Activated CD4-positive, alpha-beta T cell treated with anti-CD3 and anti-CD28 coated beads for 36 hours (primary cell): ENCODE measurements at regions of chr3 and their contacts with region 1.

Region 1: GRCh38 chr3:88979760-88980159 is 127.7 kb upstream of the EPHA3 start:
- DNase-seq: no peak
- ATAC-seq: no peak
- H3K4me3 Mint-ChIP-seq: no peak overlapping the region
- H3K27ac Mint-ChIP-seq: no peak overlapping the region
- H3K4me1 Mint-ChIP-seq: no peaks in the 10 kb centered on the region
- H3K27me3 Mint-ChIP-seq: no peaks in the 10 kb centered on the region

Region 2: DNA sequence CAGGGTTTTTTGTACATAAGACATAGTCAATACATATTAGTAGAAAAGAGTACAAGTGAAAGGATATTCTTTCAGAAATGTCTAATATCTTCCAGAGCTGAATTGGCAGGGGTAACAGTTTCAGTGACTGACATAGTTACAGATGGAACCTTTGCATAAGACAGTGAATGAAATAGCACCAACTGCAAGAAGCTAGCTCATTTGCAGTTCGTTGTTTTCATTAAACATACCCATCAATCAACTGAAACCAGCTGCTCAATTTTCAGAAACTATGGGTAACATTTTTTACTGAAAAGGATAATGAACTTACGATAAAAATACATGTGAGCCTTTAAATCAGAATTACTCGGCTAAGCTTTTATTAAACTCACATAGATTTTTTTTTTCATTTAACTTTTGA is 33.8 kb after region 1 on chr3:
- CTCF ChIA-PET with region 1: no interaction called
- POLR2A ChIA-PET with region 1: no interaction called
- intact Hi-C with region 1: loop called in 1 of 2 experiments (anchors 1 kb)
- DNase-seq: no peak
- ATAC-seq: no peak
- H3K4me3 Mint-ChIP-seq: no peak overlapping the region
- H3K27ac Mint-ChIP-seq: no peak overlapping the region
- H3K4me1 Mint-ChIP-seq: no peaks in the 10 kb centered on the region
- H3K27me3 Mint-ChIP-seq: no peaks in the 10 kb centered on the region

Region 3: DNA sequence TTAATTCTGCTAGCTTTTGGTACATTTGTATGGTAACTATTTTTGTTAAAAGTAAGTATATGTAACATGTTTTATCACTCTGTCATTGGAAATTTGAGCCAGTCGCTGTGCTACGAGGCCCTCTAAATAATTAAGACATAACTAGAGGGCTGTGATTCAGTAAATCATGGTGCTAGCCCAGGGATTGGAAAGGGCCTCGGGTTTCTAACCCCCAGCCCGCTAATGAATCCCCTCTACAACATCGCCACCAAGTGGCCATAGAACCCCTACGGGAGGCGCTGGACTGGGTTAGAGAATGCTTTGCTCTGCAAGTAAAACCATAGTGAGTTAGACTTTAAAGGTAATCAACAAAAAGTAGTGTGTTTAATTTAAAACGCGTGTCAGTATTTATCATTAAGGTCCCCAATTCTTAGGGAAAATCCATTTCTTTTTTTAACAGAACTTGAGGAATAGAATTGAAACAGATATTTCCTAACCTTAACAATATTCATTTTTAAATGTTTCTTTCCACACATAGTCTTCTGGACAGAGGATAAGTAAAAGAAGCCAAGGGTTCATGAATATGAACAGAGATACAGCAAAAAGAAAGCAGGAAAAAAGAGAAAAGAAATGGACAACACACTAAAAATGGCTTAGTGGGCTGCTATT is 872.3 kb after region 1 on chr3:
- CTCF ChIA-PET with region 1: no interaction called
- POLR2A ChIA-PET with region 1: no interaction called
- intact Hi-C with region 1: no loop called
- DNase-seq: peak; percentile 11
- ATAC-seq: no peak
- H3K4me3 Mint-ChIP-seq: no peak overlapping the region
- H3K27ac Mint-ChIP-seq: no peak overlapping the region
- H3K4me1 Mint-ChIP-seq: no peaks in the 10 kb centered on the region
- H3K27me3 Mint-ChIP-seq: no peaks in the 10 kb centered on the region